IMR-90 (cell line): ENCODE measurements at regions of chr2 and their contacts with region 1.

Region 1: GRCh38 chr2:10072656-10073480 is 7.3 kb downstream of the CYS1 start:
- DNase-seq: peak; percentile 84
- ATAC-seq: peak; percentile 99
- H3K4me3 ChIP-seq: no peak overlapping the region
- H3K27ac ChIP-seq: no peak overlapping the region
- H3K4me1 ChIP-seq: no peaks in the 10 kb centered on the region
- H3K27me3 ChIP-seq: peaks cover 35% of the 10 kb centered on the region
- CTCF ChIP-seq: peak; percentile 94
- POLR2A ChIP-seq: no peak
- RAD21 ChIP-seq: peak; percentile 87

Region 2: GRCh38 chr2:10097352-10098148 is 24.7 kb after region 1 on chr2:
- CTCF ChIA-PET with region 1: interaction called, 24 read pairs
- POLR2A ChIA-PET with region 1: no interaction called
- dilution Hi-C with region 1: no loop called
- in situ Hi-C with region 1: no loop called
- intact Hi-C with region 1: loop called (anchors 2 kb)
- DNase-seq: peak; percentile 43
- ATAC-seq: peak; percentile 100
- H3K4me3 ChIP-seq: no peak overlapping the region
- H3K27ac ChIP-seq: no peak overlapping the region
- H3K4me1 ChIP-seq: peaks cover 2% of the 10 kb centered on the region; the same call in 1 of the 2 replicates
- H3K27me3 ChIP-seq: peaks cover 6% of the 10 kb centered on the region
- CTCF ChIP-seq: peak; percentile 93
- POLR2A ChIP-seq: no peak
- RAD21 ChIP-seq: peak; percentile 85

Region 3: DNA sequence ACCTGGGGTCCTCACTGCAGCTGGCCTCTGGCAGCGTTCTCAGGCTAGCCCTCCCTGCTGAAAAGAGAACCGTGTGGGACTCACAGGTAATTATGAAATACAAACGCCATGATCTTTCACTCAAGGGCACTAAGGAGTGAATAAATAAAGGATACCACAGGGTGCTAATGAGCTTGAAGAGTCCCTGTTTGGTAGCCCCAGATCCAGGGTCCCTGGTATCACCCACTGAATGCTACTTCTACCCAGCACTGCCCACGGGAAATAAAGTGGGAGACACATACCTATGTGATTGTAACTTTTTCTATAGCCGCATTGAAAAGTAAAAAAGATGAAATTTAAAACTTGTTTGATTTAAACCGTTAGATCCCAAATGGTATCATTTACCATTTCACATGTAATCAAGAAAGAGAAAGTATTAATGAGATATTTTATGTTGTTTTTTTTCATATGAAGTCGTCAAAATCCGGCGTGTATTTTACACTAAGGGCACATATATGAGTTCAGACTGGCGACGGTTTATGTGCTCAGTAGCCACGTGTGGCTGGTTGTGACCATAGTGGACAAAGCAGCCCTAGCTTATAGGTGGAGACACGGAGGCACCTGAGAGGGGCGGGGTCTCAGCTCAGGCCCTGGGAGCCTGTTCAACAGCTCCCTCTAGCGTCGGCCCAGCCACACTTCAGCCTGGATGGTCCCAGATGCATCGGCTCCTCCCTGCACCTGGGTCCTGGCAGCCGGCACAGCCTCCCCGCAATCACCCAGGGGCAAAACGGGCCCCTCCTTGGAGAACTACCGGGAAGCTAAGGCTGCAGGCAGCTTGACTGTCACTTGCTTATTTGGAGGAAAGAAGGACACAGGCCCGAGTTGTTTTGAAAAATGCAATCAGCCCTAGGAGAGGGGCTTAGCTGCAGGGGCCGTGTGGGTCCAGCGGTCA is 336.0 kb after region 1 on chr2:
- CTCF ChIA-PET with region 1: interaction called, 4 read pairs
- POLR2A ChIA-PET with region 1: no interaction called
- dilution Hi-C with region 1: no loop called
- in situ Hi-C with region 1: no loop called
- intact Hi-C with region 1: loop called (anchors 10 kb)
- DNase-seq: peak; percentile 64
- ATAC-seq: peak; percentile 73
- H3K4me3 ChIP-seq: no peak overlapping the region
- H3K27ac ChIP-seq: no peak overlapping the region
- H3K4me1 ChIP-seq: peaks cover 23% of the 10 kb centered on the region
- H3K27me3 ChIP-seq: no peaks in the 10 kb centered on the region
- CTCF ChIP-seq: peak; percentile 94
- POLR2A ChIP-seq: no peak
- RAD21 ChIP-seq: peak; percentile 95

Region 4: DNA sequence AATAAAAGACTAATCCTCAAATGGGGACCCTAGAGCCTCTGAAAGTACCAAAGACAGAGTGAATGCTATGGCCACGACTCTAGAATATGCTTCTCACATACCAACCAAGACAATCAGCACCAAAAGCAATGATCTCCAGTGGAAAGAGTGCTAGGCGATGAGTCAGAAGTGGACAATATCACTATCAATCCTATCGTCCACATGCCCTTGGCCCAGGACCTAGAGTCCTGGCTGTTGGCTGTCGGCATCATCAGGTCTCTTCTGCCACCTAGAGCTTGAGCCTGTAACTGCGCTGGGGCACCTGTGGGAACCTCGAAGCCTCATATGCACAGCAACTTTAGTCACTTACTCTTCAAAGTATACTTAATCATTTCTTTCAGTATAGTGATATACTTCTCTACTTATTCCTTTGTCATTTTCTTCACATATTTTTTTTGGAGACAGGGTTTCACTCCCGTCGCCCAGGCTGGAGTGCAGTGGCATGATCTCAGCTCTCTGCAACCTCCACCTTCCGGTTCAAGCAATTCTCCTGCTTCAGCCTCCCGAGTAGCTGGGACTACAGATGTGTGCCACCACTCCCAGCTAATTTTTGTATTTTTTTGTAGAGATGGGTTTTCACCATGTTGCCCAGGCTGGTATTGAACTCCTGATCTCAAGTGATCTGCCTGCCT is 587.2 kb after region 1 on chr2:
- CTCF ChIA-PET with region 1: no interaction called
- POLR2A ChIA-PET with region 1: no interaction called
- dilution Hi-C with region 1: no loop called
- in situ Hi-C with region 1: loop called (anchors 10 kb)
- intact Hi-C with region 1: loop called (anchors 1 kb)
- DNase-seq: peak; percentile 90
- ATAC-seq: peak; percentile 98
- H3K4me3 ChIP-seq: no peak overlapping the region
- H3K27ac ChIP-seq: no peak overlapping the region
- H3K4me1 ChIP-seq: peaks cover 6% of the 10 kb centered on the region
- H3K27me3 ChIP-seq: no peaks in the 10 kb centered on the region
- CTCF ChIP-seq: peak; percentile 88
- POLR2A ChIP-seq: 0 out of 2 replicates have a peak, but pooled peaks have one; percentile 27
- RAD21 ChIP-seq: peak; percentile 94